Right lobe of liver (tissue), 6 donors: ENCODE measurements at regions of chr3 and their contacts with region 1.

Region 1: GRCh38 chr3:51986010-51986947 is 2.9 kb downstream of the ACY1 start:
- DNase-seq: no peak
- ATAC-seq: peak in 1 of 4 donors; percentile 3
- H3K4me3 ChIP-seq: no peak overlapping the region
- H3K27ac ChIP-seq: no peak overlapping the region
- H3K4me1 ChIP-seq: peaks cover 0 to 27% (median 7%) of the 10 kb centered on the region in 4 donors
- H3K27me3 ChIP-seq: no peaks in the 10 kb centered on the region
- CTCF ChIP-seq: no peak
- POLR2A ChIP-seq: no peak

Region 2: GRCh38 chr3:51941798-51942602 is 44.3 kb before region 1 on chr3 and contains the starts of genes PARP3 and RRP9:
- intact Hi-C with region 1: loop called in 1 of 2 experiments (anchors 5 kb)
- DNase-seq: peak; percentile 100
- ATAC-seq: peak; percentile 89 to 95 (median 91)
- H3K4me3 ChIP-seq: peak within 1 kb of the TSS; percentile 73 to 93 (median 92)
- H3K27ac ChIP-seq: peak within 1 kb of the TSS; percentile 89 to 93 (median 89)
- H3K4me1 ChIP-seq: peaks cover 0 to 27% (median 10%) of the 10 kb centered on the region in 4 donors
- H3K27me3 ChIP-seq: no peaks in the 10 kb centered on the region
- CTCF ChIP-seq: peak; percentile 99 to 100 (median 100)
- POLR2A ChIP-seq: peak; percentile 89
- total RNA-seq, gene PARP3: 13.5 to 19.4 (median 16.0) TPM
- total RNA-seq, gene RRP9: 5.2 to 10.8 (median 7.6) TPM